ENCODE measurements at regions of chr22 and their contacts with region 1.

Region 1: GRCh38 chr22:38872172-38872830 is at the start of gene CBX6:
- DNase-seq: peak; percentile 98
- ATAC-seq: peak; percentile 88 to 91 (median 90)
- H3K4me3 ChIP-seq: peak within 1 kb of the TSS; percentile 97
- H3K27ac ChIP-seq: peak within 1 kb of the TSS; percentile 94
- H3K4me1 ChIP-seq: peaks cover 20% of the 10 kb centered on the region
- H3K27me3 ChIP-seq: no peaks in the 10 kb centered on the region
- CTCF ChIP-seq: no peak
- total RNA-seq, gene CBX6: 15.1 to 21.0 (median 17.4) TPM

Region 2: DNA sequence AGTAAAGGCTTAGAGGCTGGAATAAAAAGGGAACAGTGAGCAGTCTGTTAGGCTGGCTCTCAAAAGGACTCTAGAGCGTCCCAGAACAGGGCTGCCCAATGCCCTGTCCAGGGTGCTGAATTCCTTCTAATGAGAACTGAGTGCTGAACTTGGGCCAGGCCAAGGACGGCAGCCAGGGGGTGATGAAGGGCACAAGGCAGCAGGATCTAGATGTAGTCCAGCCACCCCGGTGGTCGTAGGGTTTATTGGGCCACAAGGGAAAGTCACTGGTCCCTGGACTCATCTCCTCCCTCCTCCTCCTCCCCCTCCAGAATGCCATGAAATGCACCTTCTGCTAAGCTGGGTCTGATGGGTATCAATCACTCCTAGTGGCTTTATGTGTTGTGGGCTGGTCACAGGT is 47.7 kb before region 1 on chr22:
- intact Hi-C with region 1: no loop called
- DNase-seq: peak in 1 of 2 donors; percentile 37
- ATAC-seq: peak in 2 of 4 donors; percentile 59 to 64
- H3K4me3 ChIP-seq: no peak overlapping the region
- H3K27ac ChIP-seq: no peak overlapping the region
- H3K4me1 ChIP-seq: no peaks in the 10 kb centered on the region
- H3K27me3 ChIP-seq: peaks cover 0 to 14% (median 0%) of the 10 kb centered on the region in 3 donors
- CTCF ChIP-seq: no peak

Region 3: DNA sequence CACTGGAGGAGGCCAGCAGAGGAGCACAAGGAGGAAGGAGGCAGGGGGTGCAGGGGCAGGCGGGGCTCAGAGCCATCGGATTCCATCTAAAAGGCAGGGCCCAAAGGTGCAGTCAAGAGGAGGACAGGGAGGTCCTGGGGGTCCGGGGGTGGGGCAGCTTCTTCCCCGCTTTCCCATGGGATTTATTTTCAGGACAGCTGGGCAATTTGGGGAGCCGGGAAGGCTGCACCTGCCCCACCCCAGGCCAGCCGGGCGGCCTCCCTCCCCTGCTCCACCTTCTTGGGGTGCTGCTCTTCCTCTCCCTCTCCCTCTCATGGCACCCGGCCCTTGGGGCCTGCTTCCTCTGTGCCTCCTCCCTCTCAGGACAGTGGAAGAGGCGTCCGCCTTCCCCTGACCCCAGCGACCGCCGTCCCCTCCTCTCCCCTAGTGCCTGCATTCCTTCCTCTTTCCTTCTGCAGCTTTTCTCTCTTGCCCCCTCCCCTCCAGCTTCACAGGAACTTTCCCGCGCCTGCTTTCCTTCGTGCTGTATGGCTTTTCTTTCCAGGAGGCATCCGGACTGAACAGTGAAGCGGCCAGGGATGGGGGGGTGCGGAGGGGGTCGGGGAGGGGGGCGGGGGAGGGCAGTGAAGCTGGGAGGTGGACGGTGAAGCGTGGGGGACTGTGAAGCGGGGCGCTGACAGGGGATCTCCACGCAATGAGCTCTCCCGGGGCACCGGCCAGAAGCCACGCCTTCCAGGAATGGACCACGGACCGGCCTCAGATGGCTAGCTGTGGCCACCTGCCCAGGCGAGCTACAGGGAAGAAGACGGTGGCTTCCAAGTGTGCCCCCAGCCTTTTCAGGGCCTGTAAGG is 251.7 kb after region 1 on chr22:
- intact Hi-C with region 1: loop called (anchors 5 kb)
- DNase-seq: no peak
- ATAC-seq: no peak
- H3K4me3 ChIP-seq: no peak overlapping the region
- H3K27ac ChIP-seq: no peak overlapping the region
- H3K4me1 ChIP-seq: no peaks in the 10 kb centered on the region
- H3K27me3 ChIP-seq: no peaks in the 10 kb centered on the region
- CTCF ChIP-seq: no peak